Activated naive CD4-positive, alpha-beta T cell treated with anti-CD3 and anti-CD28 coated beads, Interleukin-2, amount 10 ng/mL, durations not matched to agents 7 days and 5 days (primary cell): ENCODE measurements at regions of chr10 and their contacts with region 1.

Region 1: DNA sequence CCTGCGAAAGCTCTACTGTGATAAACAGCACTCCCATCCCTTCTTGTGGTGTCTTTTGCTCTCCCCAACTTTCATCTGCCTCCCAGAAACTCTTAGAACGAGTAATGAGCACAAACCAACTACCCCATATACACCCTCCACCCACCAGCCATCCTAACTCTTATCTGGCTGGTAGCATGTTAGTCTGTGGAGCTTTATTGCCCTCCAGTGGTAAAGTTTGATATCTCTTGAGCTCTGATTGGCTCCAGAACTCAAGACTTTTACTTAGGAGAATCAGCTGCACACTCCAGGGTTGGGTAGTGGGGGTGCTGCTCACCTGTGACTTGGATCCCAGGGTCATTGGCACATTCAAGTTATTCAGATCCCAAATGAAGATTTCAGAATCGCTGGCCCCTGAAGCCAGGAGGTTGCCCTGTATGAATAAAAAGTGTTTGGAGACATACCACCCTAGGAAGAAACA is 10.9 kb downstream of the SEC31B start:
- DNase-seq: peak; percentile 70
- H3K4me3 Mint-ChIP-seq: peak overlapping the region; percentile 79
- H3K27ac Mint-ChIP-seq: peak overlapping the region; percentile 92
- H3K4me1 Mint-ChIP-seq: peaks cover 96% of the 10 kb centered on the region
- H3K27me3 Mint-ChIP-seq: no peaks in the 10 kb centered on the region

Region 2: GRCh38 chr10:100346765-100347567 is 161.8 kb before region 1 on chr10 and contains the start of gene SCD:
- CTCF ChIA-PET with region 1: interaction called, 43 read pairs
- DNase-seq: peak; percentile 95
- H3K4me3 Mint-ChIP-seq: peak within 1 kb of the TSS; percentile 99
- H3K27ac Mint-ChIP-seq: peak within 1 kb of the TSS; percentile 80
- H3K4me1 Mint-ChIP-seq: peaks cover 68% of the 10 kb centered on the region
- H3K27me3 Mint-ChIP-seq: no peaks in the 10 kb centered on the region

Region 3: GRCh38 chr10:100481462-100482081 is 27.1 kb before region 1 on chr10:
- CTCF ChIA-PET with region 1: interaction called, 206 read pairs
- DNase-seq: peak; percentile 93
- H3K4me3 Mint-ChIP-seq: peak overlapping the region; percentile 72
- H3K27ac Mint-ChIP-seq: peak overlapping the region; percentile 67
- H3K4me1 Mint-ChIP-seq: peaks cover 31% of the 10 kb centered on the region
- H3K27me3 Mint-ChIP-seq: peaks cover 18% of the 10 kb centered on the region

Region 4: GRCh38 chr10:100524638-100525037 is 15.9 kb after region 1 on chr10:
- CTCF ChIA-PET with region 1: interaction called, 108 read pairs
- DNase-seq: no peak
- H3K4me3 Mint-ChIP-seq: no peak overlapping the region
- H3K27ac Mint-ChIP-seq: no peak overlapping the region
- H3K4me1 Mint-ChIP-seq: peaks cover 35% of the 10 kb centered on the region
- H3K27me3 Mint-ChIP-seq: no peaks in the 10 kb centered on the region

Region 5: DNA sequence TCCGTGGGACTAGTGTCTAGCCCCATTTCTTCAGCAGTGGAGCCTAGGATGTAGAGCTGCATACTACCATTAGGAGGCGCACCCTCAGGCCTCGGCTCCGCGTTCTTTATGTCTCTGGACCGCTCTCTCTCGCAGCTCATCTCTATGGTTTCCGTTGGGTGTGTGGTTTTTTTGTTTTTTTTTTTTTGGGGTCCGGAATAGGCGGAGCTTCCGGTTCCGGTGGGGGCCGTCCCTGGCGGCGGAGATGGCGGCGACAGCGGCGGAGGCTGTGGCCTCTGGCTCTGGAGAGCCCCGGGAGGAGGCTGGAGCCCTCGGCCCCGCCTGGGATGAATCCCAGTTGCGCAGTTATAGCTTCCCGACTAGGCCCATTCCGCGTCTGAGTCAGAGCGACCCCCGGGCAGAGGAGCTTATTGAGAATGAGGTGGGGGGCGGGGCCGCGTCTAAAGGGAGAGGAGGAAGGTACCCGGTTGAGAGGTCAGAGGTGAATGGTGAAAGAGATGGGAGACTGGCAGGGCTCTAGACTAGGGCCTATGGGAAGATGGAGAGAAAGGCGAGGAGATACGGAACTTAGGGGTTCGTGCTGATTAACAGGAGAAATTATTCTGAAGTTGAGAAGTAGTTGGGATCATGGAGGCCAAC is 27.1 kb after region 1 on chr10 and contains the start of gene HIF1AN:
- CTCF ChIA-PET with region 1: interaction called, 13 read pairs
- DNase-seq: peak; percentile 92
- H3K4me3 Mint-ChIP-seq: no peak within 1 kb of the TSS
- H3K27ac Mint-ChIP-seq: no peak within 1 kb of the TSS
- H3K4me1 Mint-ChIP-seq: peaks cover 16% of the 10 kb centered on the region
- H3K27me3 Mint-ChIP-seq: no peaks in the 10 kb centered on the region

Region 6: GRCh38 chr10:100710151-100710871 is 201.6 kb after region 1 on chr10:
- CTCF ChIA-PET with region 1: no interaction called
- DNase-seq: no peak
- H3K4me3 Mint-ChIP-seq: no peak overlapping the region
- H3K27ac Mint-ChIP-seq: no peak overlapping the region
- H3K4me1 Mint-ChIP-seq: peaks cover 4% of the 10 kb centered on the region
- H3K27me3 Mint-ChIP-seq: peaks cover 89% of the 10 kb centered on the region